Heart left ventricle (tissue), 16 donors: ENCODE measurements at regions of chrX and their contacts with region 1.

Region 1: DNA sequence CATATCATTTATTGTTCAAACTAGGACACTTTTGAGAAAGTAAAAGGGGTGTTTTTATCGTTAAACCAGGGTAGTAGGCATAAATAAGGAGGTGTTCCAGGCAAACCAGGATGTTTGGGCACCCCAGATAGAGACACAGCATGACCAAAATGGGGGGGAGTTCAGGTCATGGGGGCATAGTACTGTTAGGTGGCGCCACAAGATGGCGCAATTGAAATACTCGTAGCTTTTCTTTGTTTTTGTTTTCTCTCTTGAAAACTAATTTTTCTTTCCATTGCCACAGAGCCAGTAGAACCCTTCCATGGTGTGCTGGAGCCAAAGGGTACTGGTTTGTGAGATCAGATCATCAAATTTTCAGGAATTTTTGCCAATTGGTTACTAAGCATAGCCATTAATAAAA is 283.4 kb downstream of the BCOR start:
- DNase-seq: no peak
- ATAC-seq: peak in 2 of 4 donors; percentile 22 to 46
- H3K4me3 ChIP-seq: no peak overlapping the region
- H3K27ac ChIP-seq: peak overlapping the region in 9 of 12 donors; percentile 9 to 73 (median 48)
- H3K4me1 ChIP-seq: peaks cover 0 to 19% (median 2%) of the 10 kb centered on the region in 12 donors
- H3K27me3 ChIP-seq: peaks cover 0 to 45% (median 0%) of the 10 kb centered on the region in 9 donors
- CTCF ChIP-seq: peak; percentile 25 to 56 (median 45)
- POLR2A ChIP-seq: no peak

Region 2: DNA sequence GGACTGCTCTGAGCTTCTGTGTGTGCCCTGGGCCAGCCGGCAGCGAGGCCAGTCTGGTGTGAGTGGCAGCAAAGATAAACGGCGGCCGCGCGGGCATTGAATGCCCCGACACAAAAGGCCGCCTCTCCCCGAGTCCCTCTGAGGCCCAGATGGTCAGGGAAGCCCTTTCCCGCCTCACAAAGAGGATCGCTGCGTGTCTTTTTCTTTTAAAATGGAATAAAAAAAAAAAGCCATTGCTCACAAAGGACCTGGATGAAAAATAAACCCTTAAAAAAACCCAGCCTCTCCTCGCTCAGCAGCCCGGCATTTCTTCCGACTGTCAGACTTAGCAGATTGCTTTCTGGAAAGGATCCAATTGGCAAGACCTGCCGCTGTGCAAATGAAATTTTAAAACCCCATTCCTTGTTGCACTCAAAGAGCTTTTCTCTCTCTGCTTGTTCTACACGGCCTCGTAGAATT is 295.3 kb before region 1 on chrX:
- intact Hi-C with region 1: no loop called
- DNase-seq: peak in 4 of 5 donors; percentile 29 to 49 (median 39)
- ATAC-seq: peak; percentile 10 to 63 (median 36)
- H3K4me3 ChIP-seq: peak overlapping the region in 7 of 12 donors; percentile 5 to 42 (median 32)
- H3K27ac ChIP-seq: peak overlapping the region; percentile 40 to 90 (median 70)
- H3K4me1 ChIP-seq: peaks cover 0 to 14% (median 2%) of the 10 kb centered on the region in 12 donors
- H3K27me3 ChIP-seq: peaks cover 0 to 19% (median 0%) of the 10 kb centered on the region in 9 donors
- CTCF ChIP-seq: no peak
- POLR2A ChIP-seq: no peak

Region 3: DNA sequence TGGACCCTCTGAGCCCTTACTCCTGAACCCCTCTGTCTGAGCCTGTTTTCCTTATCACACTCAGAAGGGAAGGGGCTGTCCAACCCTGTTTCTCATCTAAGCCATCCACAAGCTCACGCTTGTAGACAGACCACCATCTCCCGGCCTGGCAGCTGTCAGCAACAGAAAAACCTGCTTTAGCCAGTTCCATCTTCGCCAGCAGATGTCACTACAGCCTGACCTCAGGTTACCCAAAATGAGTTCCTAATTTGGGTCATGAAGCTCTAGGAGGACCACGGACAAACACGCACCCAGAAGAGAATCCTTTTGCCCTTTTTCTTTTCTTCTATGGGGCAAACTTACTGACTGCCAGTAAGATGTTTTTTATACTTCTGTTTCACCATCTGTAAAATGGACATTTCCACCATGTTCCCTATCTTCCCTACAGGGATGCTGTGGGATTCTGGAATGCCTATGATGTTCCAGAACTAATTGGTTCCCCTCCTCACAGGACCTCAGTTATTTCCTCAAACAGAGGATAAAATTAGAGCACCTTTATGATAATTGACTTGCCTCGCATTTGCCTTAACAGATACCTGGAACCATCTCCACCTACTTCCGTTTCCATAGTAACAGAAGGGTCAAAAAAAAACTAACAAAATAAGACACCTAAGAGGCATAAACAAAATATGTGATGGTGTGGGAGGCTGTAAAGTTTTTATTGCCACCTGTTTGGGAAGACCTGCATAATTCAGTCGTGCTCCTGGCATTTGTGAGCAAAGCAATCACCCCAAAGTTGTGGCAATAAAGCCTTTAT is 161.9 kb before region 1 on chrX:
- intact Hi-C with region 1: loop called in 2 of 10 experiments (anchors 5 to 10 kb)
- DNase-seq: peak in 1 of 5 donors; percentile 22
- ATAC-seq: no peak
- H3K4me3 ChIP-seq: no peak overlapping the region
- H3K27ac ChIP-seq: no peak overlapping the region
- H3K4me1 ChIP-seq: no peaks in the 10 kb centered on the region
- H3K27me3 ChIP-seq: peaks cover 0 to 37% (median 0%) of the 10 kb centered on the region in 9 donors
- CTCF ChIP-seq: peak in 11 of 12 donors; percentile 23 to 56 (median 38)
- POLR2A ChIP-seq: no peak

Region 4: GRCh38 chrX:39736216-39737211 is 77.9 kb before region 1 on chrX:
- intact Hi-C with region 1: loop called in 5 of 10 experiments (anchors 5 to 10 kb)
- DNase-seq: peak; percentile 84 to 95 (median 91)
- ATAC-seq: peak; percentile 83 to 97 (median 92)
- H3K4me3 ChIP-seq: no peak overlapping the region
- H3K27ac ChIP-seq: peak overlapping the region in 10 of 12 donors; percentile 7 to 70 (median 62)
- H3K4me1 ChIP-seq: peaks cover 0 to 21% (median 9%) of the 10 kb centered on the region in 12 donors
- H3K27me3 ChIP-seq: peaks cover 0 to 9% (median 0%) of the 10 kb centered on the region in 9 donors
- CTCF ChIP-seq: no peak
- POLR2A ChIP-seq: no peak

Region 5: GRCh38 chrX:40083120-40083978 is 269.0 kb after region 1 on chrX:
- intact Hi-C with region 1: loop called in 1 of 10 experiments (anchors 10 kb)
- DNase-seq: no peak
- ATAC-seq: peak in 3 of 4 donors; percentile 34 to 59 (median 37)
- H3K4me3 ChIP-seq: peak overlapping the region in 10 of 12 donors; percentile 34 to 56 (median 45)
- H3K27ac ChIP-seq: no peak overlapping the region
- H3K4me1 ChIP-seq: peaks cover 0 to 47% (median 22%) of the 10 kb centered on the region in 12 donors
- H3K27me3 ChIP-seq: peaks cover 0 to 60% (median 0%) of the 10 kb centered on the region in 9 donors
- CTCF ChIP-seq: no peak
- POLR2A ChIP-seq: no peak

Region 6: GRCh38 chrX:40153335-40154249 is 339.2 kb after region 1 on chrX:
- intact Hi-C with region 1: loop called in 4 of 10 experiments (anchors 5 to 10 kb)
- DNase-seq: peak in 4 of 5 donors; percentile 37 to 70 (median 62)
- ATAC-seq: peak in 3 of 4 donors; percentile 3 to 22 (median 21)
- H3K4me3 ChIP-seq: peak overlapping the region; percentile 21 to 63 (median 50)
- H3K27ac ChIP-seq: peak overlapping the region; percentile 65 to 89 (median 81)
- H3K4me1 ChIP-seq: peaks cover 0 to 78% (median 29%) of the 10 kb centered on the region in 12 donors
- H3K27me3 ChIP-seq: peaks cover 0 to 96% (median 0%) of the 10 kb centered on the region in 9 donors
- CTCF ChIP-seq: peak in 6 of 12 donors; percentile 9 to 37 (median 27)
- POLR2A ChIP-seq: no peak

Region 7: DNA sequence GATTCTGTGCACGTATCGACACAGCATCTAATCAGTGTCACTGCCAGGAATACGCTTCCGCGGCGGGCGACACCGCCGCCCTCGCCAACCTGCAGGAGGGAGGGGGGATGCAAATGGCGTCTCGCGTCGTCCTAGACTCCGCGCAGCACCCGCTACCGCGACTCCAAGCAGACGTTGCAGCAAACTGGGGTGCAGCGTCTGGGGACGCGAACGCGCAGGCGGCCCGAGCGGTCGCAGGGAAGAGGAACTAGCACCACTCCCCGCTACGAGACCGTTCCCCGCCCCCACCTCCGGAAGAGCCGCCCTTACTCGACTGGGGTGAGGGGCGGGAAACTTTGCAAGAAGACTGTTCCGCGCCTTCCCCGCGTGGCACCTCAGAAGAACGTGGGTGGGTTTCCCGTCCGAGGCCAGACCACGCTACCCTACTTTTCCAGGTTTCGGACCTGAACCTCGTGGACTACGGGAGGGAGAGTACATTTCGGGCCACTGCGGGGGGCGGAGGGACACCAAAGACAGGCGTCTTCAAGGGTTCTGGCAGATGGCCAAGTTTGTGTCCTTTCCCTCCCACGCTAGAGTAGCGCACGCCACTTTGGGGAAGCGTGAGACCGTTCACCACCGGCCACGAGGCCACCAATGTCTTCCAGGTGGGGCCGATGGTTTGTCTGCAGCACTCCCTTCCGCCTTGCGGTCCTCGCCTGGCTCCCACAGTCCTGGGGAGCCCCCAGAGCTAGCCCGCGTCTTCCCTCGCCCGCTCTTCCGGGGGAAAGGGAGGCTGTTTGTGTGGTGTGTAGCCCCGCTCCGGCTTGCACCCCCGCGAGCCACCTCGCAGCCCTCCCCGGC is 361.3 kb after region 1 on chrX:
- intact Hi-C with region 1: loop called in 2 of 10 experiments (anchors 5 to 10 kb)
- DNase-seq: peak; percentile 78 to 88 (median 82)
- ATAC-seq: peak; percentile 40 to 66 (median 62)
- H3K4me3 ChIP-seq: peak overlapping the region; percentile 35 to 79 (median 60)
- H3K27ac ChIP-seq: peak overlapping the region; percentile 84 to 99 (median 94)
- H3K4me1 ChIP-seq: peaks cover 0 to 41% (median 20%) of the 10 kb centered on the region in 12 donors
- H3K27me3 ChIP-seq: peaks cover 0 to 78% (median 0%) of the 10 kb centered on the region in 9 donors
- CTCF ChIP-seq: no peak
- POLR2A ChIP-seq: peak in 1 of 2 donors; percentile 31

Region 8: GRCh38 chrX:40468033-40468846 is 653.8 kb after region 1 on chrX:
- intact Hi-C with region 1: loop called in 2 of 10 experiments (anchors 5 to 10 kb)
- DNase-seq: peak; percentile 37 to 53 (median 51)
- ATAC-seq: peak; percentile 89 to 94 (median 91)
- H3K4me3 ChIP-seq: no peak overlapping the region
- H3K27ac ChIP-seq: peak overlapping the region in 4 of 12 donors; percentile 9 to 30 (median 19)
- H3K4me1 ChIP-seq: peaks cover 0 to 21% (median 3%) of the 10 kb centered on the region in 12 donors
- H3K27me3 ChIP-seq: peaks cover 0 to 23% (median 0%) of the 10 kb centered on the region in 9 donors
- CTCF ChIP-seq: peak in 10 of 12 donors; percentile 7 to 49 (median 38)
- POLR2A ChIP-seq: no peak